Caco-2 (cell line): ENCODE measurements at regions of chr17 and their contacts with region 1.

Region 1: DNA sequence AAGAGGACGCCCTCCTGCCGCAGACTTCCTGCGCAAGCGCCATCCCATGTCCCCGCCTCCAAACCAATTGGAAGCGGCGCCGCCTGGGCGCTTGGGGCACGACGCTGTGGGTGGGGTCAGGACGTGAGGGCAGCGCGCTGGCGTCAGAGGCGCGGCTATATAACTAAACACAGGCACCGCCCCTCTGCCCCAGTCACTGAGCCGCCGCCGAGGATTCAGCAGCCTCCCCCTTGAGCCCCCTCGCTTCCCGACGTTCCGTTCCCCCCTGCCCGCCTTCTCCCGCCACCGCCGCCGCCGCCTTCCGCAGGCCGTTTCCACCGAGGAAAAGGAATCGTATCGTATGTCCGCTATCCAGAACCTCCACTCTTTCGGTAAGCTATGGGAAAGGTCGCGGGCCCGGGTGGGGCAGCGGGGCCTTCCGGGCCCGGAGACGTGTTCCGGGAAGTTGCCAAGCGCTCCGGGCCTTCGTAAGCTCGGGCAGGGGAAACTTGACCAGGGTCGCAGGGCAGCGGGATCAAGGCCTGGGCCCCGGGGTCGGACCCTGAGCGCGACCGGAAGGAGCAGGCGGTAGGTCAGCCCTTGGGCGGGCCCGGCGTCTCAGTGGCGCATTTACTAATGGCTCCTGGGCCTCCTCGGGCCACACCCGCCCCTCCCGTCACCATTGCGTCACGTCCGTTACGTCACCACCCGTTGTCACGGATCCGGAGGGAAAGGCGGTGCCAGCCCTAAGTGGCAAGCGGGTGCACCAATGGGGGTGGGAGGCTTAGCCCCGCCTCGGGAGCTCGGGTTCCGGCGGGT is at the start of gene EIF1:
- DNase-seq: peak; percentile 100
- H3K4me3 ChIP-seq: peak within 1 kb of the TSS; percentile 90
- H3K4me3 Mint-ChIP-seq: peak within 1 kb of the TSS; percentile 99
- H3K27ac Mint-ChIP-seq: peak within 1 kb of the TSS; percentile 97
- H3K4me1 ChIP-seq: peaks cover 8% of the 10 kb centered on the region; the same call in 1 of the 2 replicates
- H3K4me1 Mint-ChIP-seq: peaks cover 14% of the 10 kb centered on the region
- H3K27me3 ChIP-seq: no peaks in the 10 kb centered on the region
- H3K27me3 Mint-ChIP-seq: no peaks in the 10 kb centered on the region
- CTCF ChIP-seq: no peak
- total RNA-seq, gene EIF1: 759 and 783 TPM in 2 replicates

Region 2: GRCh38 chr17:40818733-40819527 is 870.0 kb before region 1 on chr17:
- CTCF ChIA-PET with region 1: no interaction called
- POLR2A ChIA-PET with region 1: interaction called, 12 read pairs
- intact Hi-C with region 1: no loop called
- DNase-seq: peak; percentile 85 to 88
- H3K4me3 ChIP-seq: peak overlapping the region; percentile 67
- H3K4me3 Mint-ChIP-seq: peak overlapping the region; percentile 83
- H3K27ac Mint-ChIP-seq: peak overlapping the region; percentile 76
- H3K4me1 ChIP-seq: peaks cover 8% of the 10 kb centered on the region
- H3K4me1 Mint-ChIP-seq: peaks cover 8% of the 10 kb centered on the region
- H3K27me3 ChIP-seq: no peaks in the 10 kb centered on the region
- H3K27me3 Mint-ChIP-seq: no peaks in the 10 kb centered on the region
- CTCF ChIP-seq: no peak

Region 3: GRCh38 chr17:41464682-41465081 is 224.2 kb before region 1 on chr17:
- CTCF ChIA-PET with region 1: no interaction called
- POLR2A ChIA-PET with region 1: no interaction called
- intact Hi-C with region 1: no loop called
- DNase-seq: no peak
- H3K4me3 ChIP-seq: no peak overlapping the region
- H3K4me3 Mint-ChIP-seq: no peak overlapping the region
- H3K27ac Mint-ChIP-seq: no peak overlapping the region
- H3K4me1 ChIP-seq: no peaks in the 10 kb centered on the region
- H3K4me1 Mint-ChIP-seq: no peaks in the 10 kb centered on the region
- H3K27me3 ChIP-seq: no peaks in the 10 kb centered on the region
- H3K27me3 Mint-ChIP-seq: no peaks in the 10 kb centered on the region
- CTCF ChIP-seq: no peak

Region 4: GRCh38 chr17:41530062-41531051 is 158.5 kb before region 1 on chr17:
- CTCF ChIA-PET with region 1: interaction called, 5 read pairs
- POLR2A ChIA-PET with region 1: interaction called, 21 read pairs
- intact Hi-C with region 1: no loop called
- DNase-seq: peak; percentile 89 to 97
- H3K4me3 ChIP-seq: peak overlapping the region; percentile 4
- H3K4me3 Mint-ChIP-seq: peak overlapping the region; percentile 99
- H3K27ac Mint-ChIP-seq: peak overlapping the region; percentile 98
- H3K4me1 ChIP-seq: peaks cover 46% of the 10 kb centered on the region
- H3K4me1 Mint-ChIP-seq: peaks cover 54% of the 10 kb centered on the region
- H3K27me3 ChIP-seq: no peaks in the 10 kb centered on the region
- H3K27me3 Mint-ChIP-seq: no peaks in the 10 kb centered on the region
- CTCF ChIP-seq: no peak

Region 5: DNA sequence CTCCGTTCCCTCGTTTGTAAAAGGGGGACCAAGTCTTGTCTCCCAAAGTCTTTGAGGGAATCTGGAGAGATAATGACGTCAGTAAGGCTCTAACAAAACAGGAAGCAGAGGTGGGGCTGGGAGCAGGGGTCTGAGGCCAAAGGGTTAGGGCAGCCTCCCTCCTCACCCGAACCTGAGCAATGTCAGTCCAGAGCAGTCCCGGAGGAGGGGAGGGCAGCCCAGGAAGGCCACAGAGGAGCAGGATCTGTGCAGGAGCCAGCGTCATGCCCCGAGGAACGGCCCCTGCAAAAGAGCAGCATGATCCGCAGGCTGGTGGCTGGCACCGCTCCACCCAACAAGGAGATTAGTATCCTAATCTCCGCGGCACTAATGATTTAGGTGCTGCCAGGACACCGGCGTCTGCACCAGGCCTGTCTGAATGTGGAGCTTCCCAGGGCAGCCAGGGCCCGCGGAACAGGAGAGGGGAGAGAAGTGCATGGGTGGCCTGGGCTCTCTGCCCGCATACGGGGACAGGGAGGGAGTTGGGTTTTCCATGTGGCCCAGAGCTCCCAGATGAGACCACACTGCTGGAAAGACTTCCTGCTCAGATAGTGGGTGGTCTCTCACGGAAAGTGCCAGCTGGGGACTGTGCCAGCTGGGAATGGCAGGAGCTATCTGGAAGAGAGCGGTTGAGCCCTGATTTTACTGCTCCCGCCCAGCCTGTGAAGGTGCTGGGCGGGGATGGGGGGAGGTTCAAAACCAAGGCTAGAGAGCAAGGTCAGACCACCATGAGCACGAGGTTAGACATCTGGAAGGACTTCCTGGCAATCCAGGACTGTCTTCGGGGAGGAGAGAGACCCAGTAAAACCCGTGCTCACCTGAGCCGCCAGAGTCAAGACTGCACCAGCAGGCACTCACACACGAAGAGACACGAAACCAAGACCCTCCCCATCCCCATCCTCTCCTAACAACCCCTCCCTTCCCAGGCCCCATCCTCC is 53.5 kb before region 1 on chr17:
- CTCF ChIA-PET with region 1: no interaction called
- POLR2A ChIA-PET with region 1: no interaction called
- intact Hi-C with region 1: no loop called
- DNase-seq: no peak
- H3K4me3 ChIP-seq: no peak overlapping the region
- H3K4me3 Mint-ChIP-seq: no peak overlapping the region
- H3K27ac Mint-ChIP-seq: no peak overlapping the region
- H3K4me1 ChIP-seq: no peaks in the 10 kb centered on the region
- H3K4me1 Mint-ChIP-seq: no peaks in the 10 kb centered on the region
- H3K27me3 ChIP-seq: no peaks in the 10 kb centered on the region
- H3K27me3 Mint-ChIP-seq: no peaks in the 10 kb centered on the region
- CTCF ChIP-seq: no peak

Region 6: DNA sequence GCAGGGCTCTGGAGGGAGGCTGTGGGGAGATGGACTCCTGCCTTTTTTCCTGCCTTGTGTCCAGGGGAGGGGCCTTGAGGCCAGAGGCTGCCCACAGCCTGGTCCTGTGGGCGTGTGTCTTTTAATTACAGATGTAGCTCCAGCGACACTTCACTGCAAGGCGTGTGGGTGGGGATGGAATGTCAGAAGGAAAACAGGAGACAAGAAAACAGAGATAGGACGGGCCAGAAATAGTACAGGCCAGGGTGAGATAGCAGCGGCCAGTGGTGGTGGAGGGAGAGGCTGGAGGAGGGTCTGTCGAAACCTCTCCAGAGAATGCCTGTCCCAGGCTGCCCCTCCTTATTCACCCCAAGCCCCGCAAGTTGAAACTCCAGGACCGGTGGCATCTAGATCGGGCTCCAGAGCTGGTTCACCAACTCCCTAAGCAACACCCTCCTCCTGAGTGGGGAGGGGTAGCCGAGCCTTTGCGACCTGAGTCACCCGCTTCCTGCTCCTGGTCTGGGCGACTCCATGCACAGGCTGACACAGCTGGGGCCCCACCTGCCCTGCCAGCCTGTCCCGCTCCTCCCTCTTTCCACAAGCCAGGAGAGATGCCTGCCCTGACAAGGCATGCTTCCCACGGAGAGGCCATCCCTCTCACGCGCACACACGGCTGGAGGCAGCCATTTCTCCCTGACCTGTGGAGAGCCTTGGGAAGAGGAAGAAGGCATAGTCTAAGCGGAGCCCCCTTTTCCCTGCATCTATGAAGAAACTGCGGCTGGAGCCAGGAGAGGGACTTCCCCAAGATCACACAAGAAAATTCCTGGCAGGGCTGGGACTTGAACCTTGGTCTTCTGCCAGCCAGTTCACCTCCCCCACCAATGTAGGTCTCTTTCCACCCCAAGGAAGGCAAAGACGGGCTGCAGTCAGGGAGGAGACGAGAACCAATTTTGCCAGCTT is 104.2 kb after region 1 on chr17:
- CTCF ChIA-PET with region 1: interaction called, 3 read pairs
- POLR2A ChIA-PET with region 1: interaction called, 11 read pairs
- intact Hi-C with region 1: no loop called
- DNase-seq: peak; percentile 94 to 97
- H3K4me3 ChIP-seq: peak overlapping the region; percentile 34
- H3K4me3 Mint-ChIP-seq: peak overlapping the region; percentile 67
- H3K27ac Mint-ChIP-seq: peak overlapping the region; percentile 83
- H3K4me1 ChIP-seq: peaks cover 50% of the 10 kb centered on the region
- H3K4me1 Mint-ChIP-seq: peaks cover 53% of the 10 kb centered on the region
- H3K27me3 ChIP-seq: no peaks in the 10 kb centered on the region
- H3K27me3 Mint-ChIP-seq: no peaks in the 10 kb centered on the region
- CTCF ChIP-seq: no peak

Region 7: DNA sequence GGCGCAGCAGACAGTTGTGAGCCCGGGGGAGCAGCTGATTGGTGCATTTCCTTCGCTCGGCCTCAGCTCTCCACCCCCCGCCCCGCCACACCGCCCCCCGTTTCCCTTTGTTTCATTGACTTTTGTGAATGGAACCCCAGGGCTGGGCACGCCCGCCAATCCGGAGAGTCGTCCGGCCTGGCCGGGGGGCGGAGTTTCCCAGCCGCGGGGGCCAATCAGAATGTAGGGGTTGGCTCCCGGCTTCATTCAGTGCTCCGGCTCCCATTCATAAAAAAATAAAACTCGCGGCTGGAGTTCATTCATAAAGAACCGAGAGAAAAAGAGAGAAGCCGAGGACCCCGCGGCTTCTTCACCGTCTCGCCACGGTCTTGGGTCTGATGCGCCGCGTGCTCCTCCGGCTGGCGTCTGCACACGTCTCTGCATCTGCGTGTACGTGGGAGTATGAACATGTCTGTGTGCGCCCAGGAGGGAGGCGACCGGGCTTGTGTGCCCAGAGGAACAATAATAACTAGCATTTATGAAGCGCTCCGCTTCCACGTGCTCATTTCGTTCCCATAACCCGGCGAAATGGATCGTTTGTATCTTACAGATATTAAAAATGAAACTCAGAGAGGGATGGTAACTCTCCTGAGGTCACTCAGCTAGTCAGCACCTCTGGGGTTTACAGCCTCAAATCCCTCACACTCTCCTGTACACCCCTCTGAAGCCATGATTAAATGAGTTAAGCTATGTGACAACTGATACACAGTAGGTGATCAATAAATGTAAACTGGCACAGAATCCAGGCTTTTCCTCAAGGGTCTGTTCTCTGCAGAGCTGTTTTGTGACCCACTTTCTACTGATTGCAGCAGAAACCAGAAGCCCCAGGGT is 1857.7 kb after region 1 on chr17 and contains the start of gene ETV4:
- CTCF ChIA-PET with region 1: no interaction called
- POLR2A ChIA-PET with region 1: interaction called, 10 read pairs
- intact Hi-C with region 1: no loop called
- DNase-seq: peak; percentile 96 to 97
- H3K4me3 ChIP-seq: peak within 1 kb of the TSS; percentile 75
- H3K4me3 Mint-ChIP-seq: peak within 1 kb of the TSS; percentile 85
- H3K27ac Mint-ChIP-seq: peak within 1 kb of the TSS; percentile 93
- H3K4me1 ChIP-seq: peaks cover 19% of the 10 kb centered on the region
- H3K4me1 Mint-ChIP-seq: peaks cover 17% of the 10 kb centered on the region
- H3K27me3 ChIP-seq: no peaks in the 10 kb centered on the region
- H3K27me3 Mint-ChIP-seq: no peaks in the 10 kb centered on the region
- CTCF ChIP-seq: no peak
- total RNA-seq, gene ETV4: 37.8 and 48.5 TPM in 2 replicates